AG04450 (cell line): ENCODE measurements at regions of chr18 and their contacts with region 1.

Region 1: DNA sequence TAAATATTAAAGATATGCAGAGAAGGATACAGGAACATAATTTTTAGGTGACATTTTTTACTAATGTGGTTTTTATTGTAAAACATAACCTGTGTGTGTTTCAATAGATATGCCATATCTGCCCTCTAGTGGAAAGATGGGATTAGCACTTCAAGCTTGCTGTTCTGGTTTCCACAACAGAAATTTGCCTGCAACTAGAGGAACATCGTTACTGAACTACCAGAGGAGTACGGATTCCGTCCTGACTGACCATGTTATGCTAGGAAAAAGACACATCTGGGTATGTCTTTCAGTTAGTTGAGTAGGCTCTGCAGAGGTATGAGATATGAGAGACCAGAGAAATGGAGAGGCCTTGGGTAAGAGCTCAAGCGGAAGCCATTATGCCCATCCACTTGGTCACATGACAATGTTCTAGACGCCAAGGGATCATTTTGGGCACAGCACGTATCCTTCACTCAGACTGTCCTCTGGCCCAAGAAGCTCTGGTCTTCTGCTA is 104.9 kb downstream of the MBD2 start:
- DNase-seq: peak; percentile 20
- H3K4me3 ChIP-seq: no peak overlapping the region
- H3K27ac ChIP-seq: no peak overlapping the region
- H3K27me3 ChIP-seq: no peaks in the 10 kb centered on the region
- CTCF ChIP-seq: peak; percentile 86

Region 2: DNA sequence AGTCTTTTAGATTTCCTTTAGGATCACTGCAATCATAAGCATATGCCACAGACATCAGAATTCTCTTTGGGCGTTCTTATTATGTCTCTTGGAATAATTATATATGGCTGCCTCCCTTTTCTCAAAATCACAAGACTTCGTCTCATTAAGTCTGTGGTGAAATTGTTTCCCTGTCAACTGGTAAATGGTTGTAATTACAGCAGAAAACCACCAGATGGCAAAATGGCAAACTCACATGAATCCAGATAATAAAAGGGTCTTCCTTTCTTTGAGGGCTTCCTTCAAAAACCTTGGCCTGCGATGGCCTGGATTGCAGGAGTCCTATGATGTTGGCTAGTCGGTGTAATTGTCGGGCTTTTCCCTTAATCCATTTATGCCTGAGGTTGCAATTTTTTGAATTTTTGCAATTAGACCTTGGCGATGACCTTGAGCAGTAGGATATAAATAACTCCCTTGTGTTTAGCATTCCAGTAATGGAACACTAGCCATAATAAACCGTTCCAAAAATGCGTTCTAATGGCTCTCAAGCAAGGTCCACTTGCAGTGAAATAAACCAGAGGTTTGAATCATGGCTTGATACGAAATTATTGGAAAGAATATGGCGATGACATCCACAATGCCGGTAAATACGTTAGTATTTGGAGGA is 551.5 kb before region 1 on chr18:
- CTCF ChIA-PET with region 1: interaction called, 18 read pairs
- POLR2A ChIA-PET with region 1: no interaction called
- DNase-seq: no peak
- H3K4me3 ChIP-seq: no peak overlapping the region
- H3K27ac ChIP-seq: no peak overlapping the region
- H3K27me3 ChIP-seq: no peaks in the 10 kb centered on the region
- CTCF ChIP-seq: peak; percentile 55

Region 3: GRCh38 chr18:53817976-53818950 is 301.3 kb before region 1 on chr18:
- CTCF ChIA-PET with region 1: no interaction called
- POLR2A ChIA-PET with region 1: no interaction called
- DNase-seq: no peak
- H3K4me3 ChIP-seq: no peak overlapping the region
- H3K27ac ChIP-seq: no peak overlapping the region
- H3K27me3 ChIP-seq: no peaks in the 10 kb centered on the region
- CTCF ChIP-seq: no peak